ENCODE measurements at regions of chr22 and their contacts with region 1.

Region 1: GRCh38 chr22:31977141-31977841 is 33.0 kb downstream of the YWHAH start:
- DNase-seq: peak; percentile 30 to 94 (median 75)

Region 2: DNA sequence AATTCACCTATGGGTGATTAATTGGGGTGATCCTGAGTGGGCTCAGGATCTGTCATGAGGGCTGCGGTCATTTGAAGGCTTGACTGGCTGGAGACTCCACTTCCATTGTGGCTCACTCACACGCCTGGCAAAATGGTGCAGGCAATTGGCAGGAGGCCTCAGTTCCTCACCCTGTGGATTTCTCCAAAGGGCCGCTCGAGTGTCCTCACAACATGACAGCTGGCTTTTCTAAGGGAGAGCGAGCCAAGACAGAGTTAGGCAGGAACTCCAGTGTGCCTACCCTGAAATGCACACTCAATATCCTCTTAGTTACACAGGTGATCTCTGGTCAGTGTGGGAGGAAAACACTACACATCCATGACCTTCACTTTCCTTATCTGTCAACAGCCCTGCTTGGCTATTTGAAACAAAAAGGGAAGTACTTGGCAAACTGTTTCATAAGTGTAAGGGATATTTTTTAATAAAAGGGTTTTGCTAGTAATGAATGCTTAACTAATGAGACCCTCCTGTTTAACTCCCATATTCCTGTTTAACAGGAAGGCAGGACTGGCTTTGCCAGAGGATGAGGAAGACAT is 1256.9 kb before region 1 on chr22:
- intact Hi-C with region 1: no loop called
- DNase-seq: no peak

Region 3: GRCh38 chr22:32082331-32082730 is 105.0 kb after region 1 on chr22:
- intact Hi-C with region 1: loop called (anchors 2 kb)
- DNase-seq: no peak

Region 4: DNA sequence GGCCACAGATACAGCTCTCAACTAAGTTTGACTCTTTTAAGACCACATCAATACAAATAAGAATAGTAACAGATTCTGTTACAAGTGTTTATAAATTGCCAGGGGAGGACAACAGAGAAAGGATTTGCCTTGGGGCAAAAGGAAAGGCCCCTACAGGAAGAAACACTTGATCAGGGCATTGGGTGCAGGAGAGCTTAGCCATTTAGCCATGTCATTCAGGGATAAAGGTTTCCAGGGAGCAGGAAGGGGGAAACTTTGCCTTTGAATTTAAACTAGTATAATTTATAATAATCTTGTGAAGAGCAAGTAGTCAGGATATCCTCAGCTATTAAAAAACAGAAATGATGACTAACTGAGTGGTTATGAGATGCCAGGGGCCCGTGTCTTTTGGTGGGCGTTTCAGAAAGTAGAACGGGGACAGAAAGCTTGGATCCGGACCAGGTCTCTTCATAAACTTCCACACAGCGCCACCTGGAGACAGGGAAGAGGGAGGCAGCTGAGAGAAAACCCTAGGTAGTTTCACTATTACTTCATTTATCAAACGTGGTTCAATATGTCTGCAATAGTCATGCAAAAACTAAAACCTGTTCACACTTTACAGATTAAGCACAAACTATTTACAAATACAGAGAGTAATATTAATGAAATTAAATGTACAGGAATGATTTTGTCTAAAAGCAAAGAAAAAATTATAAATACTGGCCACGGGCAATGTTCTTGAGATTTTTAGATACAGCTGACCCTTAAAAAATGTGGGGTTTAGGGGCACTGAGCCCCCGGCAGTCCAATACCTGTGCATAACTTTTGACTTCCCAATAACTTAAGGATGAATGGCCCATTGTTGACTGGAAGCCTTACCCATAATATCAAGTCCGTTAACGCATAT is 288.8 kb after region 1 on chr22:
- intact Hi-C with region 1: loop called (anchors 5 kb)
- DNase-seq: peak; percentile 42 to 92 (median 66)

Region 5: DNA sequence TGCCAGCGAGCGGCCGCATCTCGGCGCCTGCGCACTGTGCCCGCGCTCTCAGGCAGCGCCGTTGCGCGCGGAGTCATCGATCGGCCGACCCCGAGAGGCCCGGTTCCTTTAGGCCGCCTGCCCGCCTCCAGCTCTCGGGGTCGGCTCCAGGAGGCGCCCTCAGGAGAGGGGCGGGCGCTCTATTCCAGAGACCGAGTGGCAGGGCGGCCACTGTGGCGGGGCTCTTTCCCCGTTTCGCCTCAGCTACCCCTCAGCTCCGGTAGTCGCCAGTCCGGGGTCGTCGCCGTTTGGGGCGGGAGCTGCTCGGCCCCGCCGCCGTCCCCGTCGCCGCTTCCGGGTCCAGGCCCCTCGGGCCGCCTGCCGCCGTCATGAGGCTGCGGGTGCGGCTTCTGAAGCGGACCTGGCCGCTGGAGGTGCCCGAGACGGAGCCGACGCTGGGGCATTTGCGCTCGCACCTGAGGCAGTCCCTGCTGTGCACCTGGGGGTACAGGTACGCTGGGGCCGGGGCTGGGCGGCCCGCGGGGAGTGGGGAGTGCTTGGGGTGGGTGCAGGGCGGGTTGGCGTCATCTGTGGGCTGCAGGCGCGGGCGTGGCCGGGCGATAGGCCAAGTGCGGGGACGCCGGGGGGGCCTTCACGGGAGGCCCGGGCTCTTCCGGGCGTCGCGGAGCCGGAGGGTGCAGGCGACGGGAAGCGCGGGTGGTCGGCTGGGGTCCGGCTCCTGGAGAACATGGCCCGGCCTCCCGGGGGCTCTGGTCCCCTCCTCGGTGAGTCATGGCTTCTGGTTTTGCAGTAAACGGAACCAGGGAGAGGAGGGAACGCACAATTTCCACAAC is 497.6 kb after region 1 on chr22 and contains the start of gene FBXO7:
- intact Hi-C with region 1: loop called (anchors 5 kb)
- DNase-seq: peak; percentile 86 to 99 (median 92)

Measured in posterior cingulate gyrus (tissue), 11 donors.